ENCODE measurements at regions of chr3 and their contacts with region 1.

Region 1: GRCh38 chr3:146326670-146327543 is 76.0 kb upstream of the PLSCR4 start:
- DNase-seq: peak; percentile 51
- H3K4me3 ChIP-seq: no peak overlapping the region
- H3K27ac ChIP-seq: no peak overlapping the region
- H3K4me1 ChIP-seq: no peaks in the 10 kb centered on the region
- H3K27me3 ChIP-seq: no peaks in the 10 kb centered on the region
- CTCF ChIP-seq: peak; percentile 46 to 58

Region 2: GRCh38 chr3:145776782-145777408 is 550.0 kb before region 1 on chr3:
- CTCF ChIA-PET with region 1: no interaction called
- dilution Hi-C with region 1: no loop called
- in situ Hi-C with region 1: no loop called
- intact Hi-C with region 1: loop called (anchors 5 kb)
- DNase-seq: peak; percentile 35
- H3K4me3 ChIP-seq: no peak overlapping the region
- H3K27ac ChIP-seq: no peak overlapping the region
- H3K4me1 ChIP-seq: no peaks in the 10 kb centered on the region
- H3K27me3 ChIP-seq: peaks cover 1% of the 10 kb centered on the region
- CTCF ChIP-seq: peak; percentile 72 to 78

Region 3: DNA sequence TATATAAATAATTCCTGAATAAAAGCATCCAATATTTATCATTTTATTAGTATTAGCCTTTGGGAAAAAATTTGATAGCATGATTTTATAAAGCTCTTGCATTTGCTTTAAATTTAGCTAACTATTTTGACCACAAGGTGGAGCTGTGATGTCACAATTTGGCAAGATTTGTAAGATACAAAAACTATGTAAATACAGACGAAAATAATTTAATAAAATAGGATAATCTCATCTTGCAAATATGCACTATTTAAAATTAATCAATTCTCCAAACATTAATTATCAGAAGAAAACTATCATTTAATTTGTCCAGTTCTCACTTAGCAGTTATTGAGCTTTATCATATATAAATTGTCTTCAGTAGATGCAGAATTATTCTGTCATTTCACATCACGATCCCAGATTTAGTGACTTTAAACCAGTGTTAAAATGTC is 261.3 kb before region 1 on chr3:
- CTCF ChIA-PET with region 1: interaction called, 11 read pairs
- dilution Hi-C with region 1: no loop called
- in situ Hi-C with region 1: loop called (anchors 10 to 25 kb)
- intact Hi-C with region 1: loop called (anchors 2 kb)
- DNase-seq: peak; percentile 24
- H3K4me3 ChIP-seq: no peak overlapping the region
- H3K27ac ChIP-seq: no peak overlapping the region
- H3K4me1 ChIP-seq: no peaks in the 10 kb centered on the region
- H3K27me3 ChIP-seq: no peaks in the 10 kb centered on the region
- CTCF ChIP-seq: peak; percentile 54 to 61

Region 4: GRCh38 chr3:146189519-146190173 is 137.3 kb before region 1 on chr3:
- CTCF ChIA-PET with region 1: interaction called, 49 read pairs
- dilution Hi-C with region 1: no loop called
- in situ Hi-C with region 1: no loop called
- intact Hi-C with region 1: loop called (anchors 1 kb)
- DNase-seq: peak; percentile 54
- H3K4me3 ChIP-seq: no peak overlapping the region
- H3K27ac ChIP-seq: no peak overlapping the region
- H3K4me1 ChIP-seq: peaks cover 3% of the 10 kb centered on the region
- H3K27me3 ChIP-seq: no peaks in the 10 kb centered on the region
- CTCF ChIP-seq: peak; percentile 78 to 80

Region 5: DNA sequence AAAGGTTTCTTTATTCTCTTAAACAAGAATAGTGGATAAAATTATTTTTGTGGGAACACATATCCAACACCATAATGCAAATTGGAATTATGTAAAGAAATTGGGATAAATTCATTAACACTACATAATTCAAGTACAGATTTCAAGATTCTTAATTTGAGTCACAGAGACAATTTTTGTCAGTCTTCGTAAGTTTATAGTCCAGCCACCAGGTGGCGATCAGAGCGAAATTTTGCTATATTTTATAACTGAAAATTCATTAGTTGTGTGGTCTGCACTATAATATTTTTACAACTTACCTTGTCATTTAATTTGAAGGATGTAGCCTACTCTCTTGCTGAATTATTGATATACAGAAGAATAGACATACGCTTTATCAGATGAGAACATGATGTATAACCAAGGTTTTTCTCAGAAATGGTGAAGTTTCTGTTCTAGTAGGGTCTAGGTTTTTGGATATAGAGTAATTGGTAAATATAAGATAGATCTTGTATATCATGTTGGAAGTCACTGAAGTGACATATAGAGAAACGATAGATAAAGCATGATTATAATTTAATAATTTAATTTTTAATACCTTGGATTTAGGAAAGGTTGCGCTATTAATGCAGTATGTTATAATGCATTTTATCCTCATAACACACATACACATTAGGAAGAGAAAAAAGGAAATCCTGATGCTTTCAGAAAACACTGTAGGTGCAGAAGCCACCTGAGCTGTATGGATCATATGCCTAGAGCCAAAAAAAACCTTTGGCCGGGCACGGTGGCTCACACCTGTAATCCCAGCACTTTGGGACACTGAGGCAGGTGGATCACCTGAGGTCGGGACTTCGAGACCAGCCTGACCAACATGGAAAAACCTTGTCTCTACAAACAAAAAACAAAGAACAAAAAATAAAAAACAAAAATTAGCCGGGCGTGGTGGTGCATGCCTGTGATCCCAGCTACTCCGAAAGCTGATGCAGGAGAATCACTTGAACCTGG is 107.7 kb before region 1 on chr3:
- CTCF ChIA-PET with region 1: no interaction called
- dilution Hi-C with region 1: no loop called
- in situ Hi-C with region 1: loop called (anchors 5 kb)
- intact Hi-C with region 1: loop called (anchors 1 kb)
- DNase-seq: no peak
- H3K4me3 ChIP-seq: no peak overlapping the region
- H3K27ac ChIP-seq: no peak overlapping the region
- H3K4me1 ChIP-seq: peaks cover 11% of the 10 kb centered on the region
- H3K27me3 ChIP-seq: no peaks in the 10 kb centered on the region
- CTCF ChIP-seq: peak; percentile 49 to 61

Region 6: GRCh38 chr3:147038481-147038880 is 711.6 kb after region 1 on chr3:
- CTCF ChIA-PET with region 1: no interaction called
- dilution Hi-C with region 1: no loop called
- in situ Hi-C with region 1: no loop called
- intact Hi-C with region 1: no loop called
- DNase-seq: no peak
- H3K4me3 ChIP-seq: no peak overlapping the region
- H3K27ac ChIP-seq: no peak overlapping the region
- H3K4me1 ChIP-seq: no peaks in the 10 kb centered on the region
- H3K27me3 ChIP-seq: no peaks in the 10 kb centered on the region
- CTCF ChIP-seq: no peak